Vagina (tissue), 2 donors: ENCODE measurements at regions of chr3 and their contacts with region 1.

Region 1: DNA sequence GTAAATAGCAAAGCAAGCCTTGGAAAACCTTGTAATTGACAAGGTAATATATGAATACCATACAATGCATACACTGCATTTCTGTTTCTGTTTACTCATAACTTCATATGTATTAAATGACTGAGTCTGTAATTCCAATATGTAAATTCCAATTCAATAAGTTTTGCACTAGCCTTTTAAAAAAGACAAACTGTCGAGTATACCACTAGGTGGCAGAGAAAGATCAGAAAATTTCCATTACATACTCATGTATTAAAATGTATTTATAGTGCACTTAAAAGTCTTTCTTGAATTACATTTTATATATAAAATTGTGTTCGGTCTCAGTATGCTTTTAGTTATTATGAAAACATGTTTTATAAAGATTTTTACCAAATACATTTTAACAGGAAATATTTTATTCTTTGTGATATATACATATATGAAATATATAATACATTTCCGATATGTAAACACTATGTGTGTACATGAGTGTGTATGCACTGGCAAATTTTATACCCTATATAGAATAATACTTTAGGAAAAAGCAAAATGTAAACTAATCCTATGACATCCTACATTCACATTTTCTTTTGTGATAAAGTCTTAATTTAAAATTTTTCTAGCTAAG is 216.8 kb downstream of the VGLL3 start:
- DNase-seq: no peak
- H3K4me3 ChIP-seq: no peak overlapping the region
- H3K27ac ChIP-seq: no peak overlapping the region
- H3K4me1 ChIP-seq: no peaks in the 10 kb centered on the region
- H3K27me3 ChIP-seq: no peaks in the 10 kb centered on the region
- CTCF ChIP-seq: peak in 2 of 3 experiments; percentile 39 to 58
- POLR2A ChIP-seq: no peak

Region 2: DNA sequence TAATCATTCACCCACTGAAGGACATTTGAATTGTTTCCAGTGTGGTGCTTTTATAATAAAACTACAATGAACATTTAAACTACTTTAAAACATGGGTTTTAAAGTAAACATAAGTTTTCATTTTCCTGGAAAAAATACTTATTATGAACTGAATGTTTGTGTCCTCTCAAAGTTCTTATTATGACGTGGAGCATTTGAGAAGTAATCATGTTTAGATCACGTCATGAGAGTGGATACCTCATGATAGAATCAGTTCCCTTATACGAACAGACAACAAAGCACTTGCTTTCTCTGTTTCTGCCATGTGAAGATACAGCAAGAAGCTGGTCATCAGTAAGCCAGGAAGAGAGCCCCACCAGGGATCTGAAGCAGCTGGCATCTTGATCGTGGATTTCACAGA is 89.7 kb before region 1 on chr3:
- intact Hi-C with region 1: no loop called
- DNase-seq: no peak
- H3K4me3 ChIP-seq: no peak overlapping the region
- H3K27ac ChIP-seq: no peak overlapping the region
- H3K4me1 ChIP-seq: no peaks in the 10 kb centered on the region
- H3K27me3 ChIP-seq: no peaks in the 10 kb centered on the region
- CTCF ChIP-seq: no peak
- POLR2A ChIP-seq: no peak

Region 3: DNA sequence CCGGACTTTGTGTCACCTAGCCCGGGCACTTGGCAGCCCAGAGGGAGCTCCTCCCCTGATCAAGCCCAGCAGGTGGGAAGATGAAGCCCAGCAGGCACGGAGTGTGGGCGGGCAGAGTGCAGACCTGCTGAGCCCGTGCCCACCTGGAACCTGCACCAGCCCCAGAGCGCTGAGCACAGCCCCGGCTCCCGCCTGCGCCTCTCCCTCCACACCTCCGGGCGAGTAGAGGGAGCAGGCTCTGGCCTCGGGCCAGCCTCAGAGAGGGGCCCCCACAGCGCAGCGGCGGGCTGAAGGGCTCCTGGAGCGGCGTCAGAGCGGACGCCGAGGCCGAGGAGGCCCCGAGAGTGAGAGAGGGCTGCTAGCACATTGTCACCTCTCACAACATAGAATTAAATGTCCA is 40.9 kb before region 1 on chr3:
- intact Hi-C with region 1: no loop called
- DNase-seq: no peak
- H3K4me3 ChIP-seq: no peak overlapping the region
- H3K27ac ChIP-seq: no peak overlapping the region
- H3K4me1 ChIP-seq: no peaks in the 10 kb centered on the region
- H3K27me3 ChIP-seq: no peaks in the 10 kb centered on the region
- CTCF ChIP-seq: no peak
- POLR2A ChIP-seq: no peak

Region 4: GRCh38 chr3:87082796-87083440 is 308.7 kb after region 1 on chr3:
- intact Hi-C with region 1: loop called (anchors 10 kb)
- DNase-seq: no peak
- H3K4me3 ChIP-seq: no peak overlapping the region
- H3K27ac ChIP-seq: no peak overlapping the region
- H3K4me1 ChIP-seq: no peaks in the 10 kb centered on the region
- H3K27me3 ChIP-seq: no peaks in the 10 kb centered on the region
- CTCF ChIP-seq: peak; percentile 30 to 46 (median 38)
- POLR2A ChIP-seq: no peak

Region 5: GRCh38 chr3:87161417-87161816 is 387.2 kb after region 1 on chr3:
- intact Hi-C with region 1: loop called (anchors 5 kb)
- DNase-seq: no peak
- H3K4me3 ChIP-seq: no peak overlapping the region
- H3K27ac ChIP-seq: no peak overlapping the region
- H3K4me1 ChIP-seq: no peaks in the 10 kb centered on the region
- H3K27me3 ChIP-seq: no peaks in the 10 kb centered on the region
- CTCF ChIP-seq: no peak
- POLR2A ChIP-seq: no peak